Activated CD8-positive, alpha-beta T cell treated with anti-CD3 and anti-CD28 coated beads for 36 hours (primary cell): ENCODE measurements at regions of chr6 and their contacts with region 1.

Region 1: DNA sequence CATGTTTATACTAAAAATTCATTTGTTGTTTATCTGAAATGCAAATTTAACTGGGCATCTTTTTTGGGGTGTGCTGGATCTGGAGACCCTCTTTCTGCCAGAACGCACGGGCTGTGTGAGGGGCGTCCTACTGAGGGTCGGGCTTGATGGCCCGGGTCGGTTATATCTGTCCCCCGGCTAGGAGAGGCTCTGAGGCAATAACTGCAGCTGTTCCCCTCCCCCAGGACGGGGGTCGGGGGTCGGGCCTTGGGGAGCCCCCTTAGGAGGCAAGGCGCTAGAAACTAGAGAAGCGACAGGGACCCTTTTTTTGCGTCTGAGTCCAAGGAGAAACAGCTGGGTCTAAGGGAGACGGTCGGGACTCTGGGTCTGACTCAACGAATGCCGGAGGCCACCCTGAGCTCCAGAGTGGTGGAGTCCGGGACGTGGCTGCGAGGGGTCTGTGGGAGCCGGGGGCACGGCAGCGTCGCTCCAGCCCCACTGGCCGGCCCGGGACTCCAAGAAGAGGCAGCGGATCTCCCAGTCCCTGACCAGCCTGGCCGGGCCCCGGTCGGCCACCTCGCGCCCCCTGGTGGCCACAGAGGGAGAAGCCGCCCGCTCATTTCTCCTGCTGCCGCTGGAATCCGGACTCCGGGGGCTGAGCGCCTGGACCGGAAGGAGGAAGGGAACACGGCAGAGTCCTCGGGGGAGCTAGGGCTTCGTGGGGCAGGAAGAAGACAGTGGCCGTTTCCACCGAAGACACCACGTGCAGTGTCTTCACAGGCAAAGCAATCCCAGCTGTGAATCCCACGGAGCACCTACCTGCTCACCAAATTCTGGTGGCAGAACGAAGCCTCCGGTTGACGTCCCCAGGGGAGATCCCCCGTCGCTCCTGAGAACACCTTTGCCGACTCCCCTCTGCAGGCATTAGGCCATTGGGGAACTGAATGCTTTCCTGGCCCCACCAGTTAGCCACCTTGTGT is 24.0 kb upstream of the SCML4 start:
- DNase-seq: peak; percentile 83
- ATAC-seq: peak; percentile 86
- H3K4me3 Mint-ChIP-seq: peak overlapping the region; percentile 72
- H3K27ac Mint-ChIP-seq: peak overlapping the region; percentile 69
- H3K4me1 Mint-ChIP-seq: peaks cover 20% of the 10 kb centered on the region
- H3K27me3 Mint-ChIP-seq: peaks cover 1% of the 10 kb centered on the region
- CTCF ChIP-seq: peak; percentile 95

Region 2: DNA sequence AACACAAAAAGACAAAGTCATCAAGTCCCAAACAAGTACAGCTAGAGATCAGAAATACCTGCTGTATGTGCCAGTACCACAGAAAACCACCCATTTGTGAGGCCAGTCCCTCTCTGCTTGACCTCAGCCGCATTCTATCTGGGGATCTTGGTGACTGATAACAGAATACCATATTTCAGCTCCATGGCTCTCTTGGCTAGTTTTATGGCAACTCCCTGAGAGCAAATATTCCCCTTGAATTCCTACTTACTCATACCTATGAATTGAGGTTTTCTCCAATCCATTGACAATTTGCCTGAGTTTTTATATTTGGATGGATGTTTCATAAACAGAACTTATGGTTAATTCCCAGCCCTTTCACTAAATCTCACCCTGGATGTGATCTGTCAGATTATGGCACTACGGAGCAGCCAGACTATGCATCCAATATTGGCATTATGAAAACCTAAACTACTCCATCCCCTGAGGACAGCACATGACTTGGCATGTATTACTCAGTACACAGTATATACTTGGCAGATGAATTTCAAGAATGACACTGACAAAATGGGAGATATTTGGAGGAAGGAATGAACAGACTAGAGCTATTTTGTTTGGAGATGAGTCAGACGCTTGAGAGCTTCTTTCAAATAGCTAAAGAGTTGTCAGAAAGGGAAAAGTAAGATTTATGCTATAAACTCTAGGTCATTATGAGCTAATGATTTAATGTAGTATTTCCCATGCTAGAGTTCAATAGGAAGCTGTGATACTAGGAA is 1666.3 kb before region 1 on chr6:
- CTCF ChIA-PET with region 1: no interaction called
- POLR2A ChIA-PET with region 1: no interaction called
- intact Hi-C with region 1: no loop called
- DNase-seq: no peak
- ATAC-seq: peak; percentile 40
- H3K4me3 Mint-ChIP-seq: no peak overlapping the region
- H3K27ac Mint-ChIP-seq: peak overlapping the region; percentile 8
- H3K4me1 Mint-ChIP-seq: peaks cover 53% of the 10 kb centered on the region
- H3K27me3 Mint-ChIP-seq: peaks cover 2% of the 10 kb centered on the region
- CTCF ChIP-seq: no peak

Region 3: GRCh38 chr6:107691062-107691751 is 156.9 kb before region 1 on chr6:
- CTCF ChIA-PET with region 1: interaction called, 13 read pairs
- POLR2A ChIA-PET with region 1: no interaction called
- intact Hi-C with region 1: no loop called
- DNase-seq: no peak
- ATAC-seq: no peak
- H3K4me3 Mint-ChIP-seq: no peak overlapping the region
- H3K27ac Mint-ChIP-seq: no peak overlapping the region
- H3K4me1 Mint-ChIP-seq: peaks cover 5% of the 10 kb centered on the region
- H3K27me3 Mint-ChIP-seq: no peaks in the 10 kb centered on the region
- CTCF ChIP-seq: no peak

Region 4: DNA sequence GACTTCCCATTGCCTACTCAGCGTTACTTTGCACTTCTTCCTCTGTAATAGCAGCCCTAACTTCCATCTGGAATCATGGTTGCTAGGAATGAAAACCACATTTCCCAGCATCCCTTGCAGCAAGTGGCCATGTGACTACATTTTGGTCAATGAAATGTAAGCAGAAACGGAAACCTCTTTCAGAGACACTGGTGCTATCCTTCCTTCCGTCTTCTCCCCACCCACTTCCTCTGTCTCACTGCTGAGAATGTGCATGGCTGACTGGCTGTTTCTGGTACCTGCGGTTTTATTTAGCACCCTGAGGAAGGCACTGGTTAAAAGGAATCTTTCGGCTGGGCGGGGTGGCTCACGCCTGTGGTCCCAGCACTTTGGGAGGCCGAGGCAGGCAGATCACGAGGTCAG is 131.4 kb before region 1 on chr6:
- CTCF ChIA-PET with region 1: interaction called, 23 read pairs
- POLR2A ChIA-PET with region 1: interaction called, 11 read pairs
- intact Hi-C with region 1: no loop called
- DNase-seq: peak; percentile 89
- ATAC-seq: peak; percentile 73
- H3K4me3 Mint-ChIP-seq: peak overlapping the region; percentile 49
- H3K27ac Mint-ChIP-seq: peak overlapping the region; percentile 84
- H3K4me1 Mint-ChIP-seq: peaks cover 69% of the 10 kb centered on the region
- H3K27me3 Mint-ChIP-seq: no peaks in the 10 kb centered on the region
- CTCF ChIP-seq: no peak

Region 5: DNA sequence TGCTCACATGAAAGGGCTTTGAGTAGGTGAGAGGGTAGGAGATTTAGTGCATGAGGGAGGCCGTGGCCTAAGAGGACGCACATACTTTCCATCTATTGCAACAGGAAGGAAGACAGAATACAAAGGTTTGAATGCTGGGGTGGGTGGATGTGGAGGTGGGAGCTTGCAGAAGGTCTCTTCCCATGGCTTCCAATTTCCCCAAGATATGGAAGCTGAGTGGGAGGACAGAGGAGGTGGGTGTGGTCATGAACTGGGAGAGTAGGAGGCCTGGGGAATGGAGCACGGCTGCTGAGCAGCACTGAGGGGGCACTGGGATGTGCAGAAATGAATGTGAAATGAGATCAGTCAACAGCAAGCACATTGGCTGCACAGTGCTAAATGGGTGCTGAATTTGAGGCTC is 94.3 kb before region 1 on chr6:
- CTCF ChIA-PET with region 1: interaction called, 26 read pairs
- POLR2A ChIA-PET with region 1: interaction called, 3 read pairs
- intact Hi-C with region 1: no loop called
- DNase-seq: no peak
- ATAC-seq: peak; percentile 70
- H3K4me3 Mint-ChIP-seq: peak overlapping the region; percentile 31
- H3K27ac Mint-ChIP-seq: peak overlapping the region; percentile 90
- H3K4me1 Mint-ChIP-seq: peaks cover 69% of the 10 kb centered on the region
- H3K27me3 Mint-ChIP-seq: no peaks in the 10 kb centered on the region
- CTCF ChIP-seq: no peak

Region 6: DNA sequence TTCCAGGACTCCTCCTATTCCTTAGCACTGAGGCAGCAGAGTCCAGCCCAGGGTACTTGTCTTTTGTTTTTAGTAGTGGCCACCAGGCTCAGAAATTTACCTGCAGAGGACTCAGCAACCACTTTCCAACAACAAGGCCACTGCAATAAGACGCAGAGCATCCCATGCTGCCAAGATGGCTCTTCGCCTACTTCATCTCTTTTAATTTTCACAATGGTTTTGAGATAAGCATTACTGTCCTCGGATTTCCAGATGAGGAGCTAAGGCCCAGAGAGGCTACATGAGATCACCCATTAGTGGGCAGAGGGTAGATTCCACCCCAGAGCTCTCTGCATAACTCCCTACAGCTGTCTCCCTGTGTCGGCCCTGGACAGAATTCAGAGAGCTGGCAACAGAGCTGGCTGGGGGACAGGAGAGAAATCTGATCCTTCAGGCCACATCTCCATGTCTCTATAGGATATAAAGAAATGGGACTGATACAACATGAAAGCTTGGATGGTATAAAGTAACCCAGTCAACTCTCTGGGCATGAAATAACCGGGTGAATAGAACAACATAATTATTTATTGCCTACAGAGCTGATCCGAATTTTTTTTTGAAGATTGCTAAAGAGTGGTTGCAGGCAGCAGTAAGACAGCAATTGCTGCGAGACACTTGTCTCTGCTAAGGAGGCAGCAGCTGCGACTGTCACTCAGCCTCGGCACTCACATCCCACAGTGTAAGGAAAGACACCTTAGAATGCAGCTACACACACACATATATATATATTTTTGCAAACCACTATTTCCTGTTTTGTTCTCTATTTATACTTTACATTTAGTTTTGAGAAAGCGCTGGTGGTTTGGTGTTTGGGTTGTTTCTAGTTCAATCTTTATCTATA is 61.2 kb before region 1 on chr6:
- CTCF ChIA-PET with region 1: interaction called, 26 read pairs
- POLR2A ChIA-PET with region 1: interaction called, 3 read pairs
- intact Hi-C with region 1: no loop called
- DNase-seq: peak; percentile 56
- ATAC-seq: peak; percentile 45
- H3K4me3 Mint-ChIP-seq: peak overlapping the region; percentile 49
- H3K27ac Mint-ChIP-seq: peak overlapping the region; percentile 74
- H3K4me1 Mint-ChIP-seq: peaks cover 84% of the 10 kb centered on the region
- H3K27me3 Mint-ChIP-seq: no peaks in the 10 kb centered on the region
- CTCF ChIP-seq: no peak

Region 7: GRCh38 chr6:107806691-107807090 is 41.4 kb before region 1 on chr6:
- CTCF ChIA-PET with region 1: interaction called, 27 read pairs
- POLR2A ChIA-PET with region 1: no interaction called
- intact Hi-C with region 1: loop called (anchors 2 kb)
- DNase-seq: no peak
- ATAC-seq: no peak
- H3K4me3 Mint-ChIP-seq: no peak overlapping the region
- H3K27ac Mint-ChIP-seq: peak overlapping the region; percentile 78
- H3K4me1 Mint-ChIP-seq: peaks cover 65% of the 10 kb centered on the region
- H3K27me3 Mint-ChIP-seq: no peaks in the 10 kb centered on the region
- CTCF ChIP-seq: no peak

Region 8: GRCh38 chr6:107866606-107867301 is 18.6 kb after region 1 on chr6:
- CTCF ChIA-PET with region 1: interaction called, 27 read pairs
- POLR2A ChIA-PET with region 1: no interaction called
- intact Hi-C with region 1: no loop called
- DNase-seq: peak; percentile 37
- ATAC-seq: peak; percentile 80
- H3K4me3 Mint-ChIP-seq: no peak overlapping the region
- H3K27ac Mint-ChIP-seq: no peak overlapping the region
- H3K4me1 Mint-ChIP-seq: peaks cover 21% of the 10 kb centered on the region
- H3K27me3 Mint-ChIP-seq: no peaks in the 10 kb centered on the region
- CTCF ChIP-seq: peak; percentile 73